A673 (cell line): ENCODE measurements at regions of chr17 and their contacts with region 1.

Region 1: GRCh38 chr17:30840771-30841170 is 9.0 kb downstream of the ATAD5 start:
- DNase-seq: no peak
- H3K4me3 ChIP-seq: no peak overlapping the region
- H3K27ac ChIP-seq: no peak overlapping the region
- H3K4me1 ChIP-seq: no peaks in the 10 kb centered on the region
- H3K27me3 ChIP-seq: no peaks in the 10 kb centered on the region
- CTCF ChIP-seq: no peak

Region 2: DNA sequence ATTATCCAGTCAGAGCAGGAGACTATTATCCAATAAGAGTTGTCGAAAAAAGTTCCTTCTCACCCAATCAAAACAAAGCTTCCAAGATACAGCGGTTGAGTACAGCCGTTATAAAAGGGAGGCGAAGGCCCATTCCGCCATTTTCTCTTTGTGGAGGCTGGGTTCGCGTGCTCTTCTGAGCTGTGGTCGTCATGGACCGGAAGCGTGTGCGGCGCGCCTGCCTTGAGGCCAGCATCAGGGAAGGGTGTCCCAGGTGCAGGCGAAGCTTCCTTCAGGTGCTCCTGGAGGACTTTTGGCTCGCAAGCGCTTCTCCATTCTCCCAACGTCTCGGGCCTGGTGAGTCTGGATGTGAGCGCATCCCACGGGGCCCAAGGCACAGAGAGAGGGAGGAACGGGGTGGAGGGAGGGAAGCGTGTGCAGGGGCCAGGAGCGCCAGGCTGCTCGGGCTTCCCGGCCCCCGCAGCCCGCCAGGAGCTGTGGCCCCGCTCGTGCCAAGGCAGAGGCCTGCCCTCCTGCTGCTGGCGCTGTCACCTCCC is 264.4 kb before region 1 on chr17:
- CTCF ChIA-PET with region 1: no interaction called
- POLR2A ChIA-PET with region 1: no interaction called
- intact Hi-C with region 1: no loop called
- DNase-seq: no peak
- H3K4me3 ChIP-seq: no peak overlapping the region
- H3K27ac ChIP-seq: no peak overlapping the region
- H3K4me1 ChIP-seq: no peaks in the 10 kb centered on the region
- H3K27me3 ChIP-seq: no peaks in the 10 kb centered on the region
- CTCF ChIP-seq: no peak

Region 3: DNA sequence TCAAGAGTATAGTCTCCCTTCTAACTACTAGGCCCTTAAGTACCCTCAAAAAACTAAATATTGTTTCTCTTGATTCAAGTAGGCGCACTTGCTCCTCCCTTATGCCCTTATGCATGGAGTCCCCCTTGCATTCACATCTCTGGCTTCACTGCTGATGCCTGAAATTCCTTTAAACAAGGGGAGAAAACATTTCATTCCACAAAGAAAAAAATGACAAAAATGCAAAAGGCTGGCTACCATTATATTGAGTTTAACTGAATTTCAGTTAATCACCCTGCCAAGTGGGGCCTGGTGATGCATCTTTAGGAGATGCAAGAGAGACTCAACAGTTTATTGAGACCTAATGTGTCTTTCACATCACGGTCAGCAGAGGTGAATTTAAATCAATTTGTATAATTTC is 51.9 kb before region 1 on chr17:
- CTCF ChIA-PET with region 1: no interaction called
- POLR2A ChIA-PET with region 1: interaction called, 10 read pairs
- intact Hi-C with region 1: no loop called
- DNase-seq: no peak
- H3K4me3 ChIP-seq: no peak overlapping the region
- H3K27ac ChIP-seq: no peak overlapping the region
- H3K4me1 ChIP-seq: no peaks in the 10 kb centered on the region
- H3K27me3 ChIP-seq: no peaks in the 10 kb centered on the region
- CTCF ChIP-seq: no peak

Region 4: GRCh38 chr17:32746698-32747097 is 1905.9 kb after region 1 on chr17:
- CTCF ChIA-PET with region 1: no interaction called
- POLR2A ChIA-PET with region 1: no interaction called
- intact Hi-C with region 1: no loop called
- DNase-seq: no peak
- H3K4me3 ChIP-seq: no peak overlapping the region
- H3K27ac ChIP-seq: no peak overlapping the region
- H3K4me1 ChIP-seq: no peaks in the 10 kb centered on the region
- H3K27me3 ChIP-seq: no peaks in the 10 kb centered on the region
- CTCF ChIP-seq: no peak